H1 (cell line): ENCODE measurements at regions of chrX and their contacts with region 1.

Region 1: GRCh38 chrX:104565791-104566680 is at the start of gene IL1RAPL2:
- DNase-seq: peak; percentile 23 to 70
- H3K4me3 ChIP-seq: peak within 1 kb of the TSS; percentile 44 to 62 (median 48)
- H3K27ac ChIP-seq: no peak within 1 kb of the TSS
- H3K4me1 ChIP-seq: peaks cover 0 to 2% (median 0%) of the 10 kb centered on the region in 4 experiments; a peak in 4 of 7 replicates
- H3K27me3 ChIP-seq: peaks cover 25 to 52% (median 41%) of the 10 kb centered on the region in 4 experiments
- CTCF ChIP-seq: peak; percentile 64 to 66 (median 64)
- EP300 ChIP-seq: no peak
- POLR2A ChIP-seq: no peak
- RAD21 ChIP-seq: peak; percentile 68 to 79
- total RNA-seq, gene IL1RAPL2: 1.1 and 1.3 TPM in 2 replicates

Region 2: GRCh38 chrX:104400387-104400786 is 165.6 kb before region 1 on chrX:
- CTCF ChIA-PET with region 1: no interaction called
- POLR2A ChIA-PET with region 1: no interaction called
- DNase-seq: no peak
- H3K4me3 ChIP-seq: no peak overlapping the region
- H3K27ac ChIP-seq: no peak overlapping the region
- H3K4me1 ChIP-seq: no peaks in the 10 kb centered on the region
- H3K27me3 ChIP-seq: no peaks in the 10 kb centered on the region
- CTCF ChIP-seq: no peak
- EP300 ChIP-seq: no peak
- POLR2A ChIP-seq: no peak
- RAD21 ChIP-seq: no peak

Region 3: DNA sequence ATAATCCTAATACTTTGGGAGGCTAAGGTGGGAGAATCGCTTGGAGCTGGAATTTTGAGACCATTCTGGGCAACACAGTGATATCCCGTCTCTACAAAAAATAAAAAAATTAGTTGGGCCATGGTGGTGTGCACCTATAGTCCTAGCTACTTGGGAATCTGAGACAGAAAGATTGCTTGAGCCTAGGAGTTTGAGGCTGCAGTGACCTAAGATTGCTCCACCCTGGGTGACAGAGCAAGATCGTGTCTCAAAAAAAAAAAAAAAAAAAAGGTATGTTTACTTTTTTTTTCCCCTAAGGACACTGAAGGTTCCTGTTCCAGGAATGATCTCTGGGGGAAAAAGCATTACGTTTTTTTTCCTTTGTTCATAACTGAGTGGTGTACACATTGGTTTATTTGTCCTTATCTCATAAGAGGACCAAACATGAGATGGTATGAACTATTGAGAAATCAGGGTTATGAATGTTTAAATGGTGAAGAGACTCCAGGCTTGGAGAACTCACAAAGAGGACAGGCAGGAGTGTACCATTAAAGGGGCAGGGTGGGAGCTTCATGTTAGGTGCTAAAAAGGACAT is 120.5 kb before region 1 on chrX:
- CTCF ChIA-PET with region 1: no interaction called
- POLR2A ChIA-PET with region 1: no interaction called
- DNase-seq: no peak
- H3K4me3 ChIP-seq: no peak overlapping the region
- H3K27ac ChIP-seq: no peak overlapping the region
- H3K4me1 ChIP-seq: no peaks in the 10 kb centered on the region
- H3K27me3 ChIP-seq: no peaks in the 10 kb centered on the region
- CTCF ChIP-seq: no peak
- EP300 ChIP-seq: no peak
- POLR2A ChIP-seq: no peak
- RAD21 ChIP-seq: no peak

Region 4: GRCh38 chrX:104488811-104489210 is 77.2 kb before region 1 on chrX:
- CTCF ChIA-PET with region 1: no interaction called
- POLR2A ChIA-PET with region 1: no interaction called
- DNase-seq: no peak
- H3K4me3 ChIP-seq: no peak overlapping the region
- H3K27ac ChIP-seq: no peak overlapping the region
- H3K4me1 ChIP-seq: no peaks in the 10 kb centered on the region
- H3K27me3 ChIP-seq: no peaks in the 10 kb centered on the region
- CTCF ChIP-seq: no peak
- EP300 ChIP-seq: no peak
- POLR2A ChIP-seq: no peak
- RAD21 ChIP-seq: no peak

Region 5: GRCh38 chrX:104641183-104641582 is 75.1 kb after region 1 on chrX:
- CTCF ChIA-PET with region 1: interaction called, 11 read pairs
- POLR2A ChIA-PET with region 1: no interaction called
- DNase-seq: peak in 1 of 2 experiments; percentile 58
- H3K4me3 ChIP-seq: no peak overlapping the region
- H3K27ac ChIP-seq: no peak overlapping the region
- H3K4me1 ChIP-seq: no peaks in the 10 kb centered on the region
- H3K27me3 ChIP-seq: no peaks in the 10 kb centered on the region
- CTCF ChIP-seq: peak; percentile 43 to 75 (median 64)
- EP300 ChIP-seq: no peak
- POLR2A ChIP-seq: no peak
- RAD21 ChIP-seq: peak; percentile 17 to 50; a peak in 2 of 4 replicates

Region 6: GRCh38 chrX:104922206-104922621 is 356.2 kb after region 1 on chrX:
- CTCF ChIA-PET with region 1: interaction called, 16 read pairs
- POLR2A ChIA-PET with region 1: no interaction called
- DNase-seq: peak; percentile 27 to 72
- H3K4me3 ChIP-seq: no peak overlapping the region
- H3K27ac ChIP-seq: no peak overlapping the region
- H3K4me1 ChIP-seq: no peaks in the 10 kb centered on the region
- H3K27me3 ChIP-seq: no peaks in the 10 kb centered on the region
- CTCF ChIP-seq: peak; percentile 87 to 99 (median 98)
- EP300 ChIP-seq: no peak
- POLR2A ChIP-seq: no peak
- RAD21 ChIP-seq: peak; percentile 82 to 89